ENCODE measurements at regions of chr19 and their contacts with region 1.

Region 1: GRCh38 chr19:17865364-17866311 is 5.9 kb downstream of the RPL18A start:
- DNase-seq: peak in 1 of 2 experiments; percentile 59
- H3K4me3 ChIP-seq: no peak overlapping the region
- H3K27ac ChIP-seq: no peak overlapping the region
- H3K4me1 ChIP-seq: peaks cover 0 to 18% (median 13%) of the 10 kb centered on the region in 4 experiments; a peak in 6 of 7 replicates
- H3K27me3 ChIP-seq: no peaks in the 10 kb centered on the region
- CTCF ChIP-seq: no peak
- EP300 ChIP-seq: no peak
- POLR2A ChIP-seq: peak; percentile 81 to 92
- RAD21 ChIP-seq: no peak

Region 2: DNA sequence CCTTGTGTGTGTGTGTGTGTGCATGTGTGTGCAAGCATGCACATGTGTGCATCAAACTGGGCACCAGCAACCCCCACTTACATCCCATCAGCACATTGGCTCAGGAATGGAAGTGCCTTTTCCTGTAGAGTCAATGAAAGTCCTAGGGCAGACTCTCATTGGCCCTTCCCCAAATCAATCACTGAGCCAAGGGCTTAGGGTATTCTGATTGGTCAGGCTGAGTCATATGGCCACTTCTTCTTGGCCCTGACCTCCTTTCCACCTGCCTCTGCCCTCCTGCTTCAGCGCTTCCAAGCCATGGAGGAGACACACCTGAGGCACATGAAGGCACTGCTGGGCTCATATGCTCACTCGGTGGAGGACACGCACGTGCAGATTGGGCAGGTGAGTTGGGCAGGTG is 93.5 kb before region 1 on chr19:
- CTCF ChIA-PET with region 1: no interaction called
- POLR2A ChIA-PET with region 1: no interaction called
- DNase-seq: no peak
- H3K4me3 ChIP-seq: no peak overlapping the region
- H3K27ac ChIP-seq: no peak overlapping the region
- H3K4me1 ChIP-seq: no peaks in the 10 kb centered on the region
- H3K27me3 ChIP-seq: no peaks in the 10 kb centered on the region
- CTCF ChIP-seq: no peak
- EP300 ChIP-seq: no peak
- POLR2A ChIP-seq: no peak
- RAD21 ChIP-seq: no peak

Region 3: GRCh38 chr19:17830567-17831418 is 34.8 kb before region 1 on chr19:
- CTCF ChIA-PET with region 1: interaction called, 9 read pairs
- POLR2A ChIA-PET with region 1: interaction called, 133 read pairs
- DNase-seq: peak; percentile 93 to 95
- H3K4me3 ChIP-seq: peak overlapping the region; percentile 66 to 93 (median 80)
- H3K27ac ChIP-seq: peak overlapping the region; percentile 82
- H3K4me1 ChIP-seq: peaks cover 0 to 15% (median 3%) of the 10 kb centered on the region in 4 experiments; a peak in 6 of 7 replicates
- H3K27me3 ChIP-seq: no peaks in the 10 kb centered on the region; a peak in 1 of 7 replicates
- CTCF ChIP-seq: no peak
- EP300 ChIP-seq: no peak
- POLR2A ChIP-seq: 0 out of 3 replicates have a peak, but pooled peaks of 1 of the 2 experiments have one; percentile 64
- RAD21 ChIP-seq: no peak

Region 4: DNA sequence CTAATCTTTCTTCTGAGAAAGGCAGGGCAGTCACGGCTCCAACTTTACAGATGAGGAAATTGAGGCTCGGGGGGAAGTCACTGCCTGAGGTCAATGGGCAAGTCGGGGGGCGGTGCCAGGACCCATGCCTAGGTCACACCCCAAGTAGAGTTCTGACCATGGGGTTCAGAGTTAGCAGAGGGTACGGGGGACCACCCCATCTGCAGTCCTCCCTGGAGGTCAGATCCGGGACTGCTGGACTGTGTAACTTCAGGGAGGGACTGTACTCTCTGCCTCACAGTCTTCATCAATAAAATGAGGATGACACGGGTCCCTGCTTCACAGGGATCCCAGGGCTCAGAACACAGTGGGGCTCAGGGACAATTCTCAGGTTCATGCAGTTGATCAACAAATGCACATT is 13.8 kb after region 1 on chr19:
- CTCF ChIA-PET with region 1: no interaction called
- POLR2A ChIA-PET with region 1: interaction called, 30 read pairs
- DNase-seq: no peak
- H3K4me3 ChIP-seq: no peak overlapping the region
- H3K27ac ChIP-seq: no peak overlapping the region
- H3K4me1 ChIP-seq: no peaks in the 10 kb centered on the region
- H3K27me3 ChIP-seq: no peaks in the 10 kb centered on the region
- CTCF ChIP-seq: no peak
- EP300 ChIP-seq: no peak
- POLR2A ChIP-seq: no peak
- RAD21 ChIP-seq: no peak

Region 5: GRCh38 chr19:17915951-17916593 is 50.4 kb after region 1 on chr19:
- CTCF ChIA-PET with region 1: interaction called, 4 read pairs
- POLR2A ChIA-PET with region 1: interaction called, 10 read pairs
- DNase-seq: no peak
- H3K4me3 ChIP-seq: no peak overlapping the region
- H3K27ac ChIP-seq: no peak overlapping the region
- H3K4me1 ChIP-seq: no peaks in the 10 kb centered on the region
- H3K27me3 ChIP-seq: no peaks in the 10 kb centered on the region
- CTCF ChIP-seq: no peak
- EP300 ChIP-seq: no peak
- POLR2A ChIP-seq: no peak
- RAD21 ChIP-seq: no peak

Measured in H1 (cell line).